Endothelial cell of umbilical vein (primary cell): ENCODE measurements at regions of chr1 and their contacts with region 1.

Region 1: GRCh38 chr1:31955917-31956736 is 18.0 kb upstream of the PTP4A2 start:
- DNase-seq: peak; percentile 97
- H3K4me3 ChIP-seq: no peak overlapping the region
- H3K27ac ChIP-seq: peak overlapping the region; percentile 95
- H3K4me1 ChIP-seq: peaks cover 20% of the 10 kb centered on the region
- H3K27me3 ChIP-seq: no peaks in the 10 kb centered on the region
- CTCF ChIP-seq: peak; percentile 27 to 50
- POLR2A ChIP-seq: no peak

Region 2: DNA sequence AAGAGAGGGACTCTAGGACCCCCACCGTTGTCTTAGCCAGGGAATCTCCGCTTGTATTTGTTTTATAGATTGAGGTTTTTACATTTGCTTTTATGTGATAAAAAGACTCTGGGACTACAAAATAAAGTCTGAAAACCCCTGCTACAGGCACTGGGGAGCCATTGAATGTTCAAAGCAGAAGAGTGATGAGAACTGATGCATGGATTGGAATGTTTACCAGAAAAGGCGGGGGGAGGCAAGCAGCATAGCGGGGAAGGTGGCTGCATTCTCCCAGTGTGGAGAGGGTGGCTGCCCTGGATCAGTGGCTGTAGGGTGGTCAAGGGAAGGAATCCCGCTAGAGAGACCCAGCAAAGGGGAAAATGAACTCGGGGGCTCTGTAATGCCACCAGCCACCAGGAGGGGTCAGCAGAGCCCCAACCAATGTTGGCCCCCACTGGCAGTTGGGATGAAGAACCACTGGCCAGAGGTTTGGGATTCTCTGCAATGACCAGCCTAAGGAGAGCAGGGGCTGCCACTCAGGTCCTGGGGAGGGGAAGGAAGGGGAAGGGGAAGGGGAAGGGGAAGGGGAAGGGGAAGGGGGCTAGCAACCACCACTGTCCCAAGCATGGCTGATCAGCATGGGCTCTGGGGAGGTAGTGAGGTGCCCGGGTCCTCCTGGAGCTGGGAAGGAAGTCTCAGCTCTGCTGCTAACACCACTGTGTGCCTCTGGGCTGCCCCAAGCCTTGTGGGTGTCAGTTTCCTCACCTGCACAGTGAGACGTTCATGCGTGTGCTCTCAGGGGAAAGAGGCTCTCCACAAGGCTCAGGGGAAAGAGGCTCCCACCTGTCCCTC is 292.3 kb before region 1 on chr1:
- CTCF ChIA-PET with region 1: no interaction called
- POLR2A ChIA-PET with region 1: no interaction called
- dilution Hi-C with region 1: no loop called
- intact Hi-C with region 1: loop called (anchors 5 kb)
- DNase-seq: peak; percentile 48
- H3K4me3 ChIP-seq: no peak overlapping the region
- H3K27ac ChIP-seq: no peak overlapping the region
- H3K4me1 ChIP-seq: no peaks in the 10 kb centered on the region
- H3K27me3 ChIP-seq: no peaks in the 10 kb centered on the region
- CTCF ChIP-seq: peak; percentile 86 to 90
- POLR2A ChIP-seq: no peak

Region 3: DNA sequence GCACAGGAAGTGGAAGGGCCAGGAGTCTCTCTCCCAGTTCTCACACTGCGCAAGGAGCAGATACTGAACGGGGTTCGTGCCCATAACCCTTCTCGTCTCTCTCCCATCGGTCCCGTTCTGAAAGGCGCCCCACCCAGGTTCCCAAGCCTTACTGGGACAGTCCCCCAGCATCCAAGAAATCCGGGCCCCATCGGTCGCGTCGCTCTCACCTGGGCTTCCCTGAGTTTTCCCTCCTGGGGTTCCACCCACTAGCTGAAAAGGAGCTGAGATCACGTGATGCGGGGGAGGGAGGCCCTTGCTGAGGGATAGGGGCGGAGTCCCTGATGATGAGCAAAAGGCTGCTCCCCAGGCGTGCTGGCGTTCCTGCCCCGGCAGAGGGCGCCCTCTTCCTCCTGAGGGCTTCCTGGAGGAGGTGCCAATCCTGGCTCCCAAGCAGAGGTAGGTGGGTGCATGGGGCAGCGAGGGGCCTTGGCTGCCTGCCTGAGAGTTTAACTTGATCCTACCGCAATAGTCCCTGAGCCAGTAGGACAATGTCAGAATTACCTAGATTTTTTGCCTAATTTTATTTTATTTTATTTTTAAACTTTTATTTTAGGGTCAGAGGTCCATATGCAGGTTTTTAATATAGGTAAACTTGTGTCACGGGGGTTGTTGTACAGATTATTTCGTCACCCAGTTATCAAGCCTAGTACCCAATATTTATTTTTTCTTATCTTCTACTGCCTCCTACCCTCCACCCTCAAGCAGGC is 140.2 kb before region 1 on chr1 and contains the start of gene SPOCD1:
- CTCF ChIA-PET with region 1: interaction called, 16 read pairs
- POLR2A ChIA-PET with region 1: interaction called, 3 read pairs
- dilution Hi-C with region 1: no loop called
- intact Hi-C with region 1: no loop called
- DNase-seq: peak; percentile 78
- H3K4me3 ChIP-seq: peak within 1 kb of the TSS in 1 of 3 experiments; percentile 1
- H3K27ac ChIP-seq: no peak within 1 kb of the TSS
- H3K4me1 ChIP-seq: peaks cover 3% of the 10 kb centered on the region
- H3K27me3 ChIP-seq: no peaks in the 10 kb centered on the region
- CTCF ChIP-seq: peak; percentile 87 to 95
- POLR2A ChIP-seq: no peak
- total RNA-seq, gene SPOCD1: 0.27 and 24.9 TPM in 2 replicates

Region 4: GRCh38 chr1:31855038-31855845 is 100.9 kb before region 1 on chr1:
- CTCF ChIA-PET with region 1: no interaction called
- POLR2A ChIA-PET with region 1: no interaction called
- dilution Hi-C with region 1: no loop called
- intact Hi-C with region 1: no loop called
- DNase-seq: no peak
- H3K4me3 ChIP-seq: no peak overlapping the region
- H3K27ac ChIP-seq: no peak overlapping the region
- H3K4me1 ChIP-seq: no peaks in the 10 kb centered on the region
- H3K27me3 ChIP-seq: no peaks in the 10 kb centered on the region
- CTCF ChIP-seq: no peak
- POLR2A ChIP-seq: no peak

Region 5: DNA sequence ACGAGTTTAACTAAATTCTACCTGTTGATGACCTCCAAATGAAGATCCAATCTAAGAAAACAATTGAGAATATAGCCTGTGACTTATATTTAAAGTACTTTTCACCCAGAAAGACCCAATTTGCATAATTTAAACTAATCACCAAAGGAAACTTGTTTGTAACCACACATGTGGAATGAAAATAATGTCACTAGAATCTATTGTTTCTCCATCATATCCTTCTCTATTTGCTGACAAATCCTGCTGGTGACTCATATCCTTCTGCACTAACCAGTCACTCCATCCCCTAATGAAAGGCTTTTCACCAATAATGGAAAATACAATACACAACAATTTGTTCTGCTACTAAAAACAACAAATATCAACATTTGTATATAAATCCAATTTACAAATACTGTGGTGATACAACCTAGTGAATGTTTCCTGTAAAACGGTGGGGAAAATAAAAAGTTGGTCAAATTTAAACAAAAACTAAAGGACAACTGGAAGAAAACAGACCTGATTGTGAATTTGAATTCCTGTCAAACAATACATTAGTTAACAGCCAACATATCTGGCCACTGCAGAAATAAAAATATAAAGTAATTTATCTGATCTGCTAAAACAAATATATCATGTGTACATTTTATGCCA is 24.4 kb before region 1 on chr1:
- CTCF ChIA-PET with region 1: interaction called, 197 read pairs
- POLR2A ChIA-PET with region 1: no interaction called
- dilution Hi-C with region 1: no loop called
- intact Hi-C with region 1: no loop called
- DNase-seq: peak; percentile 86
- H3K4me3 ChIP-seq: peak overlapping the region in 2 of 3 experiments; percentile 38 to 62
- H3K27ac ChIP-seq: peak overlapping the region; percentile 91
- H3K4me1 ChIP-seq: peaks cover 72% of the 10 kb centered on the region
- H3K27me3 ChIP-seq: no peaks in the 10 kb centered on the region
- CTCF ChIP-seq: no peak
- POLR2A ChIP-seq: no peak

Region 6: GRCh38 chr1:31944205-31945089 is 11.7 kb before region 1 on chr1:
- CTCF ChIA-PET with region 1: interaction called, 197 read pairs
- POLR2A ChIA-PET with region 1: interaction called, 8 read pairs
- dilution Hi-C with region 1: no loop called
- intact Hi-C with region 1: loop called (anchors 1 kb)
- DNase-seq: peak; percentile 86
- H3K4me3 ChIP-seq: peak overlapping the region in 1 of 3 experiments; percentile 32
- H3K27ac ChIP-seq: peak overlapping the region; percentile 25
- H3K4me1 ChIP-seq: peaks cover 18% of the 10 kb centered on the region
- H3K27me3 ChIP-seq: no peaks in the 10 kb centered on the region
- CTCF ChIP-seq: no peak
- POLR2A ChIP-seq: peak; percentile 82